Endothelial cell of umbilical vein (primary cell): ENCODE measurements at regions of chr5 and their contacts with region 1.

Region 1: GRCh38 chr5:72234265-72234700 is 85.8 kb downstream of the MRPS27 start:
- DNase-seq: peak; percentile 89
- H3K4me3 ChIP-seq: no peak overlapping the region
- H3K27ac ChIP-seq: peak overlapping the region; percentile 78
- H3K4me1 ChIP-seq: peaks cover 43% of the 10 kb centered on the region
- H3K27me3 ChIP-seq: no peaks in the 10 kb centered on the region
- CTCF ChIP-seq: no peak
- POLR2A ChIP-seq: no peak

Region 2: GRCh38 chr5:72046106-72046505 is 188.2 kb before region 1 on chr5:
- CTCF ChIA-PET with region 1: no interaction called
- POLR2A ChIA-PET with region 1: no interaction called
- dilution Hi-C with region 1: no loop called
- intact Hi-C with region 1: no loop called
- DNase-seq: no peak
- H3K4me3 ChIP-seq: no peak overlapping the region
- H3K27ac ChIP-seq: no peak overlapping the region
- H3K4me1 ChIP-seq: no peaks in the 10 kb centered on the region
- H3K27me3 ChIP-seq: peaks cover 26 to 37% of the 10 kb centered on the region in 2 experiments
- CTCF ChIP-seq: no peak
- POLR2A ChIP-seq: no peak

Region 3: DNA sequence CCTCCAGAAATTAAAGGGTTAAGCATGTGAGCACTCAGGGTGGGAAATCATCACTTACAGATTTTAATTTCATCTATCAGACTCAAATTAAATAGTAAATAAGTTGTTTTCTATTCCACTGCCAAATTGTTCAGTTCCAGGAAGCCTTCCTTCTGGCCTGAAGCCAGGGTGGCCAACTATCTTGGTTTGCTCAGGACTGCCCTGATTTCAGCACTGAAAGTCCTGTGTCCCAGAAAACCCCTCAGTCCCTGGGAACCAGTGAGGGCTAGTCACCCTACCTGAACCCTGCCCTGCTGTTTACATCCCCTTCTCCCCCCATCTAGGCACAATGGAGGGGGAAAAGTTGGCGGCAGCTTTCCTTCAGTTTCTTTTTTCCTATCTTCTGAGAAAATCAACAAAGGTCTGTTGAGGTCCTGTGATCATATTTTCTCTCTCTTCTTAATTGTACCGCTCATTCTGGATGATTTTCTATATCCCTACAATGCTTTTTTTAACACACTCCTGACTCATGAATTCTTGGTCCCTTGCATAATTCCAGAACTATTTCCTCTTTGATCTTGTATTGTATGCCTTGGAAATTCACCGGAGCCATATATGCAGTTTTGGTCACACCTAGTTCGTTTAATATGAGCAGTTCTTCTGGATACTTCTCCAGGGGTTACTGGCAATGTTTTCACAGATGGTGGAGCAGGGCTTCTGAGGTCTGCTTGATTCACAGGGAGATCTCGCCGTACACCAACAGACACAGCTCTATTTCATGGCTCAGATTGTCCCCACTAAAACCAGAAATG is 23.2 kb before region 1 on chr5:
- CTCF ChIA-PET with region 1: interaction called, 5 read pairs
- POLR2A ChIA-PET with region 1: no interaction called
- dilution Hi-C with region 1: no loop called
- intact Hi-C with region 1: loop called (anchors 1 kb)
- DNase-seq: peak; percentile 93
- H3K4me3 ChIP-seq: peak overlapping the region in 1 of 3 experiments; percentile 26
- H3K27ac ChIP-seq: peak overlapping the region; percentile 97
- H3K4me1 ChIP-seq: peaks cover 38% of the 10 kb centered on the region
- H3K27me3 ChIP-seq: no peaks in the 10 kb centered on the region
- CTCF ChIP-seq: no peak
- POLR2A ChIP-seq: peak; percentile 31